ENCODE measurements at regions of chr11 and their contacts with region 1.

Region 1: GRCh38 chr11:110185121-110185591 is 92.0 kb downstream of the ZC3H12C start:
- DNase-seq: no peak
- CTCF ChIP-seq: no peak

Region 2: DNA sequence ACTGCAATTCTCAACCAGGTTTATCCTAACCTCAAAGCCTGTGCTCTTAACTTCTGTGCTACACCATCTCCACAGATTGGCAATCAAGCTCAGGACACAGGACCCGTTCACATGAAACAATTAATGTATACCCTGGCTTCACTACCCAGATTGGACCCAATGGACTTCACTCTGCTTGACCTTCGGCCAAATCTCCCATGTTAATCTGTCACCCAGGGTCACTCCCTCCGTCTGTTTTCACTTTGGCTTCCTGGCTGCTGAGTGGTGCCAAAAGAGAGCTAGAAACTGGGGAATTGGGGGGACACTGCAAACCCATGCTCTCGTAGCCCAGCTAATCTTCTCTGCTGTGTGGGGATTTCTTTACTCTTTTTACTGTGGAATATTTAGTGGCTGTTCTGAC is 308.1 kb before region 1 on chr11:
- CTCF ChIA-PET with region 1: no interaction called
- POLR2A ChIA-PET with region 1: no interaction called
- DNase-seq: no peak
- CTCF ChIP-seq: no peak

Region 3: DNA sequence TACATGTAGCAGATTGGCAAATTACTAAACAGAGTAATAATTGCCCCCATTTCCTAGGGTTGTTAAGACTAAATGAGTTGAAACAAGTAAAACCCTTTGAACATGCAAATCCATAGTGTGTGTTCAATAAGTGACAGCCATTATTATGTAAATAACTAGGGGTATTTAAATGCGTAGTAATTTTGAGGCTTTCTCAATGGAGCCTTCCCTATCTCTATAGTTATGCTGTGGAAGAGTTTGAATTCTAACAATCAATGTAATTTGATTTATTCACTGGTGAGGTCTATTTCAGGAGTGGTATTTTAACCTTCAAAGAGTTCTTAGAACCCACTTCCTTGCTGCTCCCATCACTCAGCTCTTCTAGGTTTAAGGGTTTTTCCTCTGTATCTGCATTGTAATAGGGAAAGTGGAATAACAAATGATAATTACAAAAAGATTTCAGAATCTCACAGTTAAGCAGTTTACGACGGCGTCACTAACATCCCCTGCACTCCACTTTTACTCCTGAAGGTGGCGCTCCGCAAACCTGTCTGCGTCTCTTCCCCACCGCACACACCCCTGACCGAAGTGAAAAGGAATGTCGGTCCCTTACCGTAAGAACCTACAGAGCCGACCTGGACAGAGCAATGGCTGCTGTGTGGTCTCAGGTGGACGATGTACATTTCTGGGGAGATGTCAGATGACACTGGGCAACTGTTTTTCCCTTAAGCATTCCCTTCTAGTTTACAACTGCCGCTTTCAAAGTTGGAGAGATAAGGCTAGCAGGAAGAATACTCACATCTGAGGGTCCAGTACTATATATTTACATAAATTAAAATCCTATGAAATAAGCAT is 11.1 kb before region 1 on chr11:
- CTCF ChIA-PET with region 1: interaction called, 16 read pairs
- POLR2A ChIA-PET with region 1: no interaction called
- DNase-seq: peak; percentile 55
- CTCF ChIP-seq: peak; percentile 65